Activated naive CD4-positive, alpha-beta T cell treated with anti-CD3 and anti-CD28 coated beads for 36 hours (primary cell): ENCODE measurements at regions of chr22 and their contacts with region 1.

Region 1: DNA sequence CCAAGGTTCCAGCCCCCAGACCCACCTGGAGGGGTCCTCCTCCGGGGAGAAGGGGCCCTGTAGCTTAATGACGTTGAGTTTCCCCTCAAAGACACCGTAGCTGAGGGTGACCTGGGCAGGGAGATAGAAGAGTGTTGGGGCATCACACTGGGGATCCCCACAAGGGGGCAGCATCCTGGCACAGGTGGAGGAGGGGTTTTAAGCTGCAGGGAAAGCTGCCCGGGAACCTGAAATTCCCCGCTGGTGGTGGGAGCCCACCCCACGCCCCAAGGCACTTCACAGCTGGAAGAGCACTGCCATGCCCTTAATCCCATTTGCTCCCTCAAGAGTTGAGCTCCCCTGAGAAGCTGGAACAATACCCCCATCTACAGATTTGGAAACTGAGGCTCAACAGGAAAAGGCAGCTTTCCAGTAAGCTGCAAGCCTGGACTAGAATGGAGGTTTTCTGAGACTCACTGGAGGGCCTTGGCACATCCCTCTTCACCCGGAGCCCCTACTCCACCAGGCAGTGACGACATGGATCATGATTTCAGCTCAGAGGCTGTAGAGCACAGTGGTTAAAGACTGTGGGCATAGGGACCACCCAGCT is 13.7 kb downstream of the MFNG start:
- DNase-seq: peak; percentile 53
- H3K4me3 Mint-ChIP-seq: no peak overlapping the region
- H3K27ac Mint-ChIP-seq: no peak overlapping the region
- H3K4me1 Mint-ChIP-seq: no peaks in the 10 kb centered on the region
- H3K27me3 Mint-ChIP-seq: no peaks in the 10 kb centered on the region

Region 2: DNA sequence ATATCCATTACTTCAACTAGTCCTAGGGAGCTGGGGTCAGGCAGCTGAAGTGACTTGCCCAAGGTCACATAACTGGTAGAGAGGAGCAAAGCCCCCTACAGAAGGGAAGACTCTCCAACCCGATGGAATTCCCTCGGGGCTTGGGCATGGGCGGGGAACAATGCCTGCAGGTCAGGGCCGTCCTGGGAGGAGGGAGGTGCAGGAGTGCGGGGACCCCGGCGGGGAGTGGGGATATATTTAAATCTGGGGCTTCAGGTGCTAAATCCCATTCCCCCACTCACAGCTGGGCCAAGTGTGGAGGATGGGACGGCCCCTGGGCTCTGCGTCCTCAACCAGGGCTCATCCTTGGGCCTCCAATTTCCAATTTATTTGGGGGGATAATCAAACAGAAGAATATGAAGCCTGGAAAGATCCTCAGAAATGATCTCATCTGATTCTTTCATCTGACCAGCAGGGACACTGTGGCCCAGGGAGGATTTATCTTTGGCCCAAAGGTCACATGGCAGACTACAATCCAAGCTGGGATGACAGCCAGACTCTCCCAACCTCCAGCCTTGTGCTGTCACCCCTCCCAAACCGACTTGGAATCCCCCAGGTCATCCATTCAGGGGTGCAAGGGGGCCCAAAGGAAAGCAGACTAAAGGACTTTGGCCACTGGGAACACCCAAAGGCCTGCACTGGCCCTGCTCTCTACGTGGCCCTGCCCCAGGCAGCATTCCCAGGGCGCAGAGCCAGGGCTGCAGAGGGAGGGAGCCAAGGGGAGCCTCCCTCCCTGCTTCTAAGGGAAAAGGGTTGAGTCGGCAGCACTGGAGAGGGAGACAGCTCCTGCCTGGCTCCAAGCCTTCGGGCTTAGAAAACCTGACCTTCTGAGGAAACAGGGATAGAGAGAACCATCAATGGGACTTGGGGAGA is 275.7 kb before region 1 on chr22:
- CTCF ChIA-PET with region 1: no interaction called
- intact Hi-C with region 1: no loop called
- DNase-seq: no peak
- H3K4me3 Mint-ChIP-seq: no peak overlapping the region
- H3K27ac Mint-ChIP-seq: peak overlapping the region; percentile 25
- H3K4me1 Mint-ChIP-seq: peaks cover 55% of the 10 kb centered on the region
- H3K27me3 Mint-ChIP-seq: no peaks in the 10 kb centered on the region

Region 3: DNA sequence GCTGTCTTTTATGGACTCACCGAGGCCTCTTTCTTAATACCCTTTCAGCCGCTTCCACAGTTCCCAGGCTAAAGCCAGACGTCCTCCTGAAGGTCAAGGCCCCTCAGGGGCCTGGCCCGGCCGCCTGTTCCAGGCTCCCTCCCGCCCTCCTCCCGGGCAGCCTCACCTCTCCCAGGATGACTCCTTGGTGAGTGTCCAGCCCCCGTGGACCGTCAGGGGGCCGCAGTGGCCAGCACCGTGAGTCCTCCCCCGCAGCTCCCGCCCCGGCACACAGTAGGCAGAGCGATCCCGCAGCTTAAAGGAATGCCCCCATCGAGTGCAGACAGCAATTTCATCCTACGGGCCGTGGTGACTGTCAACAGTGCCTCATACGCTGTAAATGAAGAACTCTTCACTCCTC is 78.2 kb before region 1 on chr22:
- CTCF ChIA-PET with region 1: no interaction called
- intact Hi-C with region 1: no loop called
- DNase-seq: no peak
- H3K4me3 Mint-ChIP-seq: no peak overlapping the region
- H3K27ac Mint-ChIP-seq: no peak overlapping the region
- H3K4me1 Mint-ChIP-seq: no peaks in the 10 kb centered on the region
- H3K27me3 Mint-ChIP-seq: peaks cover 6% of the 10 kb centered on the region

Region 4: DNA sequence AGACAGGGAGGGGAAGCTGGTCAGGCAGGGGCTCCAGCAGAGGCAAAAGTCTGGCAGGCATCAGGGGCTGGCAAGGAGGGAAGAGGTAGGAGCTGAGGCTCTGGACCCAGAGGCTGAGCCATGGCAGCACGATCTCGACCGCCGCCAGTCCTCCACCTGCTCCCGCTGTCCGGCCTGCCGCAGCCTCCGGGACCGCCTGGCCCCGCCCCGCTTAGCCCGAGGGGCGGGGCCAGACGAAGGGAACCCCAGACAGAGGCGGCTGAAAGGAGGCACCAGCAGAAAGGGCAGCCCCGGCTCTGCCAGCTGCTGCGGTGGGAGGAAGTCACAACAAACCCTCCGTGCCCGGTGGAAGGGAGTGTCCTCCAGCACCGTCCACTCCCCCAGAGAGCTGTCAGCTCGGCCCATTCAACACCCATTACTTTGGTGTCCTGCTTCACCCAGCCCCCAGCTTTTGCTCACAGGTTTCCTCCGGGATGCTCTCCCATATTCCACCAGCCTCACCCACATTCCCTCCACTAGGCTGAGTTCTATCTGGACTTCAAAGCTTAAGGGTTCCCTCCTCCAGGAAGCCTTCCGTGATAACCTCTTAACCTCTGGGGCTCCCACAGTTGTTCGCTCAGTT is 13.8 kb after region 1 on chr22 and contains the start of gene MFNG:
- CTCF ChIA-PET with region 1: interaction called, 10 read pairs
- intact Hi-C with region 1: no loop called
- DNase-seq: peak; percentile 86
- H3K4me3 Mint-ChIP-seq: peak within 1 kb of the TSS; percentile 97
- H3K27ac Mint-ChIP-seq: peak within 1 kb of the TSS; percentile 97
- H3K4me1 Mint-ChIP-seq: peaks cover 65% of the 10 kb centered on the region
- H3K27me3 Mint-ChIP-seq: no peaks in the 10 kb centered on the region
- total RNA-seq, gene MFNG: 83.1 to 90.9 TPM

Region 5: GRCh38 chr22:37498289-37498909 is 25.9 kb after region 1 on chr22:
- CTCF ChIA-PET with region 1: interaction called, 30 read pairs
- intact Hi-C with region 1: loop called (anchors 2 kb)
- DNase-seq: peak; percentile 74
- H3K4me3 Mint-ChIP-seq: no peak overlapping the region
- H3K27ac Mint-ChIP-seq: no peak overlapping the region
- H3K4me1 Mint-ChIP-seq: peaks cover 21% of the 10 kb centered on the region
- H3K27me3 Mint-ChIP-seq: no peaks in the 10 kb centered on the region